Naive thymus-derived CD4-positive, alpha-beta T cell (primary cell): ENCODE measurements at regions of chr7 and their contacts with region 1.

Region 1: GRCh38 chr7:133081599-133082389 is at the start of gene CHCHD3:
- DNase-seq: peak; percentile 83 to 97 (median 95)
- ATAC-seq: peak; percentile 99
- H3K4me3 ChIP-seq: peak within 1 kb of the TSS; percentile 94
- H3K4me3 Mint-ChIP-seq: peak within 1 kb of the TSS; percentile 87 to 95 (median 92)
- H3K27ac ChIP-seq: peak within 1 kb of the TSS; percentile 93
- H3K27ac Mint-ChIP-seq: peak within 1 kb of the TSS; percentile 52 to 96 (median 93)
- H3K4me1 ChIP-seq: peaks cover 14 to 17% of the 10 kb centered on the region in 2 donors
- H3K4me1 Mint-ChIP-seq: peaks cover 13 to 44% (median 34%) of the 10 kb centered on the region in 7 donors
- H3K27me3 ChIP-seq: no peaks in the 10 kb centered on the region
- H3K27me3 Mint-ChIP-seq: peaks cover 0 to 7% (median 0%) of the 10 kb centered on the region in 5 donors
- total RNA-seq, gene CHCHD3: 25.6 to 44.6 (median 31.2) TPM

Region 2: DNA sequence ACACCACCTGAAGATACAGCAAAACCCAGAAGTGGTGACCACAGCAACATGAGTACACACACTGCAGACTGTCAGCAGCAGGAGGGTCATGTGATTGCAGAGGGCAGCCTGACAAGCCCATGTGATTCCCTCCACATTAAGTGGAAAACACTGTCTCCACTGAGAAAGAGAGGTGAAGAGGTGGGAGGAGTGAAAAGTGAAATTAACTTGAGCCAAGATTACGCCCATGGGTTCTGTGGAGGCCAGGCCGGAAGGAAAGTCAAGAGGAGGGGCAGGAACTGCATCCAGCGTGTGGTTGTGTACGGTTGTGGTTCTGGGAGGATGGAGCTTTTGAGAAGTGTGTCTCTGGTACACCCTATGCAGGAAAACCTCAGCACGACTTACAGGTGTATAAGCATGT is 644.1 kb before region 1 on chr7:
- CTCF ChIA-PET with region 1: no interaction called
- POLR2A ChIA-PET with region 1: no interaction called
- intact Hi-C with region 1: loop called in 1 of 2 experiments (anchors 5 kb)
- DNase-seq: peak in 7 of 9 donors; percentile 25 to 60 (median 51)
- ATAC-seq: peak; percentile 58
- H3K4me3 ChIP-seq: peak overlapping the region; percentile 19
- H3K4me3 Mint-ChIP-seq: peak overlapping the region; percentile 12 to 83 (median 68)
- H3K27ac ChIP-seq: peak overlapping the region; percentile 14
- H3K27ac Mint-ChIP-seq: peak overlapping the region; percentile 17 to 85 (median 71)
- H3K4me1 ChIP-seq: peaks cover 36 to 78% of the 10 kb centered on the region in 2 donors
- H3K4me1 Mint-ChIP-seq: peaks cover 51 to 94% (median 81%) of the 10 kb centered on the region in 7 donors
- H3K27me3 ChIP-seq: no peaks in the 10 kb centered on the region
- H3K27me3 Mint-ChIP-seq: peaks cover 0 to 3% (median 0%) of the 10 kb centered on the region in 5 donors

Region 3: GRCh38 chr7:132654150-132654549 is 427.6 kb before region 1 on chr7:
- CTCF ChIA-PET with region 1: no interaction called
- POLR2A ChIA-PET with region 1: no interaction called
- intact Hi-C with region 1: loop called (anchors 2 to 5 kb)
- DNase-seq: peak in 4 of 9 donors; percentile 23 to 32 (median 26)
- ATAC-seq: peak; percentile 48
- H3K4me3 ChIP-seq: no peak overlapping the region
- H3K4me3 Mint-ChIP-seq: peak overlapping the region in 8 of 10 donors; percentile 44 to 75 (median 54)
- H3K27ac ChIP-seq: no peak overlapping the region
- H3K27ac Mint-ChIP-seq: peak overlapping the region in 5 of 9 donors; percentile 6 to 92 (median 84)
- H3K4me1 ChIP-seq: peaks cover 14 to 21% of the 10 kb centered on the region in 2 donors
- H3K4me1 Mint-ChIP-seq: peaks cover 19 to 57% (median 45%) of the 10 kb centered on the region in 7 donors
- H3K27me3 ChIP-seq: no peaks in the 10 kb centered on the region
- H3K27me3 Mint-ChIP-seq: no peaks in the 10 kb centered on the region

Region 4: DNA sequence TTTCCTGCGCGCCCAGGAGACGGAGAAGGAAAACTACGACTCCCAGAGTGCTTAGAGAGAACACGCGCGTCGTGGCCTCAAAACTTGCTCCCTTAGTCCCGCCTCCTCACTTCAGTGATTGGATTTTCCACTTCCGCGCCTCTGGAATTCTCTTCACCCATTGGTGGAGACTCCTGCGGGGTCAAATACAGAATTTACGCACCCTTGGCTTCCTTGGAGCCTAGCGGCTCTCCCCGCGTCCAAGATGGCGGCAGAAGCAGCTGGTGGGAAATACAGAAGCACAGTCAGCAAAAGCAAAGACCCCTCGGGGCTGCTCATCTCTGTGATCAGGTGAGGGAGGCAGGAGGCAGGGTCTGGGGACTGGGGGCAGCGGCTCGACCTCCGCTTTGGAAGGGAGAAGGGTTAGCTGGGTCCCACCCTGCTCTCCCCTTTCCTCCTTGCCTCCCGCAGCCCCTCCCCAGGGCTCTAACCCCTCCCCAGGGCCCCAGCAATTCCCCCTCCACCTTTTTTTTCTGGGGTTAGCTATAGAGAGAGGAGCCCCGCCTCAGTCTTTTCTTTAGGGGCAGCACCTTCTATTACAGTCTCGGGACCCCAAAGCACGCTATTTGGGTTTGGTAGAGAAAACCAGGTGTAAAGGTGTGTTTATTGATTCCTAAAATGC is 171.2 kb after region 1 on chr7 and contains the start of gene EXOC4:
- CTCF ChIA-PET with region 1: no interaction called
- POLR2A ChIA-PET with region 1: no interaction called
- intact Hi-C with region 1: loop called (anchors 1 kb)
- DNase-seq: peak; percentile 66 to 97 (median 95)
- ATAC-seq: peak; percentile 100
- H3K4me3 ChIP-seq: peak within 1 kb of the TSS; percentile 87
- H3K4me3 Mint-ChIP-seq: peak within 1 kb of the TSS; percentile 85 to 99 (median 96)
- H3K27ac ChIP-seq: peak within 1 kb of the TSS; percentile 93
- H3K27ac Mint-ChIP-seq: peak within 1 kb of the TSS; percentile 94 to 98 (median 96)
- H3K4me1 ChIP-seq: peaks cover 4 to 7% of the 10 kb centered on the region in 2 donors
- H3K4me1 Mint-ChIP-seq: peaks cover 22 to 45% (median 40%) of the 10 kb centered on the region in 7 donors
- H3K27me3 ChIP-seq: no peaks in the 10 kb centered on the region
- H3K27me3 Mint-ChIP-seq: peaks cover 0 to 9% (median 0%) of the 10 kb centered on the region in 5 donors
- total RNA-seq, gene EXOC4: 65.4 to 106 (median 82.9) TPM

Region 5: DNA sequence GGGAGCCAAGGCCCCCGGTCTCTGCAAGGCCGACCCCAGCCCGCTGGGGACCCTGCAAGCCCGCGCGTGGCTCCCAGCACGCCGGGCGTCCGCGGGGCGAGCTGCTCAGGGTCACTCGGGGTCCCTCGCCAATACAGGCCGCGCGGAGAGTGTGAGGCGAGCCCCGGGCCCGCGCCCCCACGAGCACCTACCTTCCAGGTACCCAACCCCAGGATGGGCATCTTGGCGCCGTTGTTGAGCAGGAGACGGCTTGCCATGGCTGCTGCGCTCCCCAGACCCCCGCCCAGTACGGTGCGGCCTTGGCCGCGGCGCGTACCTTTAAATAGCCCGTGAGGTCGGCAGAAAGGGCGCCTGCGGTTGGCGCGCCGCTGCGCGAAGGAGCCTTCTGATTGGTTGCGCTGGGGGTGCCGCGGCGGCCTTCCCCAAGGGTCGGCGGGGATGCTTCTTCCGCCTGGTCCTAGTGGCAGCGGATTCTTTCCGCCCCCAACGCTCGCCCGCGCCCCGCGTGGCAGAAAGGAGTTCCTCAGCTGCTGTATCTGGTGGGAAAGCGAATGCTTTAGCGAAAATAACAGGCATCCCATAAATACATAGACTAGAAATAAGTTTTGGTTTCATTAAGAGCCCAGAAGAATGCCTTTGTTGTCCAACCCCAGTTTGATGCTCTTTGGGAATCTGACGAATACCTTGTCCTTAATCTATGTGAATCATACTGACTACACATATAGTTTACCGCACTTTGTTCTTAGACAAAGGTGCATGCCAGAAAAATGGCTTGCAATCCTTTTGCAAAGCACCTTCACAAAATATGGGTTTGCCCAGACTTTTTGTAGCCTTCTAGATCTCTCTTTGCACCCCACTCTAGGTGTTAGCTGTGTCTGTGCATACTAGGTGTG is 1377.3 kb after region 1 on chr7 and contains the start of gene AKR1B1:
- CTCF ChIA-PET with region 1: no interaction called
- POLR2A ChIA-PET with region 1: no interaction called
- intact Hi-C with region 1: loop called (anchors 2 to 5 kb)
- DNase-seq: peak; percentile 76 to 88 (median 84)
- ATAC-seq: peak; percentile 94
- H3K4me3 ChIP-seq: peak within 1 kb of the TSS; percentile 78
- H3K4me3 Mint-ChIP-seq: peak within 1 kb of the TSS; percentile 71 to 94 (median 89)
- H3K27ac ChIP-seq: peak within 1 kb of the TSS; percentile 72
- H3K27ac Mint-ChIP-seq: peak within 1 kb of the TSS; percentile 80 to 92 (median 84)
- H3K4me1 ChIP-seq: peaks cover 20 to 30% of the 10 kb centered on the region in 2 donors
- H3K4me1 Mint-ChIP-seq: peaks cover 30 to 55% (median 48%) of the 10 kb centered on the region in 7 donors
- H3K27me3 ChIP-seq: no peaks in the 10 kb centered on the region
- H3K27me3 Mint-ChIP-seq: no peaks in the 10 kb centered on the region
- total RNA-seq, gene AKR1B1: 62.2 to 108 (median 100) TPM